SK-N-SH (cell line): ENCODE measurements at regions of chr1 and their contacts with region 1.

Region 1: GRCh38 chr1:50978144-50978851 is 8.3 kb downstream of the CDKN2C start:
- DNase-seq: peak; percentile 82
- H3K4me3 ChIP-seq: peak overlapping the region; percentile 84 to 90
- H3K27ac ChIP-seq: peak overlapping the region; percentile 94 to 96
- H3K4me1 ChIP-seq: peaks cover 14 to 26% of the 10 kb centered on the region in 2 experiments; a peak in 3 of 4 replicates
- H3K27me3 ChIP-seq: no peaks in the 10 kb centered on the region
- CTCF ChIP-seq: no peak
- EP300 ChIP-seq: no peak
- RAD21 ChIP-seq: no peak

Region 2: GRCh38 chr1:50796272-50796671 is 182.0 kb before region 1 on chr1:
- CTCF ChIA-PET with region 1: no interaction called
- POLR2A ChIA-PET with region 1: no interaction called
- DNase-seq: no peak
- H3K4me3 ChIP-seq: no peak overlapping the region
- H3K27ac ChIP-seq: no peak overlapping the region
- H3K4me1 ChIP-seq: no peaks in the 10 kb centered on the region
- H3K27me3 ChIP-seq: no peaks in the 10 kb centered on the region
- CTCF ChIP-seq: no peak
- EP300 ChIP-seq: no peak
- RAD21 ChIP-seq: no peak

Region 3: GRCh38 chr1:50959913-50960844 is 18.1 kb before region 1 on chr1 and contains the start of gene FAF1:
- CTCF ChIA-PET with region 1: interaction called, 11 read pairs
- POLR2A ChIA-PET with region 1: no interaction called
- DNase-seq: peak; percentile 97
- H3K4me3 ChIP-seq: peak within 1 kb of the TSS; percentile 56 to 89
- H3K27ac ChIP-seq: peak within 1 kb of the TSS; percentile 65 to 88
- H3K4me1 ChIP-seq: peaks cover 0 to 2% of the 10 kb centered on the region in 2 experiments; a peak in 2 of 4 replicates
- H3K27me3 ChIP-seq: no peaks in the 10 kb centered on the region
- CTCF ChIP-seq: peak; percentile 32
- EP300 ChIP-seq: no peak
- RAD21 ChIP-seq: no peak
- polyA plus RNA-seq, gene FAF1: 8.7 and 9.7 TPM in 2 replicates

Region 4: DNA sequence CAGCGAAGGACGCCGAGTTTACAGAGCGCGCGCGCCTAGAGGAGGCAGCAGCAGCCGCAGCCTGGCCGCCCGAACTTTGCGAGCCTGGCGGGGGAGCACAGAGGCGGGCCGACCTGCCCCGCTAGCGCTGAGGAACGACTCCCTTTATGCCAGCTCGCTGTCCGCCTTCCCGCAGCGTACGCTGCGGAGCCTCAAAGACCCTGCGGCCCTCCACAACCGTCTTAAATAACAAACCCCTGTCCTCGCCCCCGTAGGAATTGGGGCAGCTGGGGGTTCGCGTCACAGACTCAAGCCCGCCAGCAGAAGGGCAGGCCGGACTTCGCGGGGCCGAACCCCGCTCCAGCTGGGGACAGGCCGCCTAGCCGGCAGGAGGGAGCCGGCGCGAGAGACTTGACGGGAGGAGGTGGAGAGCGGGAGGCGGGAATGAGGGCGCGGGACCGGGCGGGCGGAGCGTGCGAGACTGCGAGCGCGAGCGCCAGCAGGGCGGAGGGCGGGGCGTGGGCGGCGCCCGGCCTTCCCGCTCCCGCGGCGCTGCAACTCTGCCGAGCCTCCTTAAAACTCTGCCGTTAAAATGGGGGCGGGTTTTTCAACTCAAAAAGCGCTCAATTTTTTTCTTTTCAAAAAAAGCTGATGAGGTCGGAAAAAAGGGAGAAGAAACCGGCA is 10.0 kb before region 1 on chr1:
- CTCF ChIA-PET with region 1: interaction called, 11 read pairs
- POLR2A ChIA-PET with region 1: interaction called, 18 read pairs
- DNase-seq: peak; percentile 96
- H3K4me3 ChIP-seq: peak overlapping the region; percentile 96
- H3K27ac ChIP-seq: peak overlapping the region; percentile 95
- H3K4me1 ChIP-seq: peaks cover 0 to 4% of the 10 kb centered on the region in 2 experiments; a peak in 1 of 4 replicates
- H3K27me3 ChIP-seq: no peaks in the 10 kb centered on the region
- CTCF ChIP-seq: peak; percentile 45; the same call in 1 of the 2 replicates
- EP300 ChIP-seq: peak in 1 of 2 experiments; percentile 31; a peak in 1 of 4 replicates
- RAD21 ChIP-seq: peak; percentile 35

Region 5: GRCh38 chr1:50989694-50990093 is 11.4 kb after region 1 on chr1:
- CTCF ChIA-PET with region 1: no interaction called
- POLR2A ChIA-PET with region 1: no interaction called
- DNase-seq: no peak
- H3K4me3 ChIP-seq: no peak overlapping the region
- H3K27ac ChIP-seq: no peak overlapping the region; a peak in 1 of 4 replicates
- H3K4me1 ChIP-seq: no peaks in the 10 kb centered on the region
- H3K27me3 ChIP-seq: no peaks in the 10 kb centered on the region
- CTCF ChIP-seq: no peak
- EP300 ChIP-seq: no peak
- RAD21 ChIP-seq: no peak

Region 6: GRCh38 chr1:51359879-51360278 is 381.6 kb after region 1 on chr1:
- CTCF ChIA-PET with region 1: no interaction called
- POLR2A ChIA-PET with region 1: no interaction called
- DNase-seq: no peak
- H3K4me3 ChIP-seq: no peak overlapping the region
- H3K27ac ChIP-seq: no peak overlapping the region
- H3K4me1 ChIP-seq: no peaks in the 10 kb centered on the region
- H3K27me3 ChIP-seq: no peaks in the 10 kb centered on the region
- CTCF ChIP-seq: no peak
- EP300 ChIP-seq: no peak
- RAD21 ChIP-seq: no peak